KBM-7 (cell line): ENCODE measurements at regions of chr10 and their contacts with region 1.

Region 1: DNA sequence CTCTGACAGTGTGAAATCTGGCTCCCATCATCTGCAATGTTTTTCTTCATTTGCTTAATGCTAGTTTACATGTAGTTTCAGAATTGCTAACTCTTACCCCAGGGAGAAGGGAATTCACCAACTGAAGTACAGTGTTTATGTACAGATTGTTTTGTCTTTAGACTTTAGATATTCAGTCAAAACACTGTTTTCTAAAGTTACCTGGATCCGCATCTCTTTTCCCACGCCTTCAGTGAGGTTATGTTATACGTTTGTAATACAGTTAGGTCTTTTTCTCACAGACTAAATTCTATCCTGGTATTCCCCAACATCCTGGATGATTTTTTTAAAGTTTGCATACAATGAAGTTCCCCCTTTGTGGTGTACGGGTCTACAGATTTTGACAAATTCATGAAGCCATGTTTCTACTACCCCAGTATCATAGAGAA is 3.2 kb upstream of the LYZL1 start:
- DNase-seq: no peak

Region 2: DNA sequence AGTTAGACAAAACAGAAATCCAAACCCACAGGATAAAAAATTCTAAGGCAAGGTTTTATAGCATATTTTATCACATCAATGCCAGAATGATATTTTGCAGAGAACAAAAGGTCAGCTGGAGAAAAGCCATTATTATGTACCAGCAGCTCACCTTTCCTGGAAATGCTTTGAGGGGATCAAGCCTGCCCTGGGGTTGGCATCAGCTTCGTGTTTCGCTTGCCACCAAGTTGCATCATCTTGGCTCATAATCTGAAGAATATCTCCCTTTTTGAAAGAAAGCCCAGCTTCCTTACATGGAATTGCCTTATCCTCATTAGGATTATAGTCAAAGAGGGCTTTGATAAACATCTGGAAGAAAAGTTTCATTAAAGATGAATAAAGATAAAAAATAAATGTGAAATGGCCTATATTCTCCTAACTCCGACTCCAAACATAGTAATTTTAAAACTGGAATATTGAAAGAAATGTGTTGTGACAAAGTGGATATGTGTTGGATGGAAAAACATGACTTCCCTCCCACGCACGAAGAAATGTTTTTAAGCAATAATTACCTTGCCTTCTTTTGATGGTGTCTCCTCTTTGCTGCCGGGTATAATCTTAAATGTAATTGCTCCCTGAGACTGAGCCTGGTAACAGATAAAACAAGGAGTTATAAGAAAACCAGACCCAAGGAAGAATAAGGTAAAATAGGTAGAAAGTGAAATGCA is 1165.4 kb before region 1 on chr10:
- in situ Hi-C with region 1: no loop called
- DNase-seq: no peak

Region 3: GRCh38 chr10:28628184-28628893 is 657.3 kb before region 1 on chr10:
- in situ Hi-C with region 1: loop called (anchors 25 kb)
- DNase-seq: peak; percentile 55

Region 4: GRCh38 chr10:29448125-29448524 is 162.5 kb after region 1 on chr10:
- in situ Hi-C with region 1: no loop called
- DNase-seq: no peak

Region 5: GRCh38 chr10:30270247-30270646 is 984.6 kb after region 1 on chr10:
- in situ Hi-C with region 1: no loop called
- DNase-seq: no peak